GM12878 (cell line): ENCODE measurements at regions of chr9 and their contacts with region 1.

Region 1: GRCh38 chr9:98056269-98057137 is at the start of gene NANS:
- DNase-seq: no peak
- ATAC-seq: peak; percentile 97
- H3K4me3 ChIP-seq: peak within 1 kb of the TSS; percentile 77
- H3K27ac ChIP-seq: peak within 1 kb of the TSS; percentile 84
- H3K4me1 ChIP-seq: peaks cover 3% of the 10 kb centered on the region; the same call in 1 of the 2 replicates
- H3K27me3 ChIP-seq: no peaks in the 10 kb centered on the region
- CTCF ChIP-seq: no peak
- EP300 ChIP-seq: no peak
- POLR2A ChIP-seq: peak; percentile 99
- RAD21 ChIP-seq: no peak
- polyA plus RNA-seq, gene NANS: 21.0 to 26.1 TPM

Region 2: DNA sequence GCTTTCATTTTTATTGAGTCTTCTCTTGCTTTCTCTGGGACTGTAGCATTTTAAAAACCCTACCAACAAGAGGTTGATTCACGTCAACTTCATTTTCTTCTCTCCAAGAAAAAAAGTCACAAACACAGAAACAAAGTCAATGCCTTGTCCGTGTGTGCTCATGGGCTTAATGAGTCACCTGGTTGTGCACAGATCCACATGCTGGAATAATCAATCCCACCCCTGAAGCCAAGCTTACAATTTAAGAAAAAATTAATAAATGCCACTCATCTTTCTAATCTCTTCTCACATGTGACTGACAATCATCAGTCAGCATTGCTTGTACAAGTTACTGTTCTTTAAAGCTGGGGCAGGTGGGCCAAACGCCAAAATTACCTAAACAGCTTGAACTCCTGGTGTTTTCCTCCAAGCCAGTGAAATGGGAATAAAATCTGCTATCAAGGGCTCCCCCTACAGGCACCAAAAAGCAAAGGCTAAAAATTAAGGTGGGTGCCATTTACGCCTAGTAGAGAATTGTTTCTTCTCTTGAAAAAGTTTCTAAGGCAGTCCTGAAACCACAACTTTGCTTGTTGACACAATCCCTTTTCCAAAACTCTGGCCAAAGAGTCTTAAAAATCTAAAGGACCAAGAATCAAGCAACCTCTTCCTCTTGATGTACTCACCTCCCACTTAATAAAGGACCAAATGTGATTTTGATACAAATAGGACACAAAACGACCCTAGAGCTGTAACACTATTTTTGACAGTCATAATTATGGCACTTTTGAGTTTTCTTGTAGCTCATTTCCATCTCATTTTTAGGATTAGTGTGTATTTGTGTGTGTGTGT is 155.6 kb before region 1 on chr9:
- CTCF ChIA-PET with region 1: no interaction called
- POLR2A ChIA-PET with region 1: no interaction called
- RAD21 ChIA-PET with region 1: no interaction called
- SMC1A ChIA-PET with region 1: no interaction called
- in situ Hi-C with region 1: no loop called
- intact Hi-C with region 1: no loop called
- DNase-seq: no peak
- ATAC-seq: peak; percentile 61
- H3K4me3 ChIP-seq: no peak overlapping the region
- H3K27ac ChIP-seq: no peak overlapping the region
- H3K4me1 ChIP-seq: peaks cover 5% of the 10 kb centered on the region; the same call in 1 of the 2 replicates
- H3K27me3 ChIP-seq: no peaks in the 10 kb centered on the region
- CTCF ChIP-seq: peak; percentile 76 to 79 (median 78)
- EP300 ChIP-seq: no peak
- POLR2A ChIP-seq: no peak
- RAD21 ChIP-seq: peak; percentile 76

Region 3: DNA sequence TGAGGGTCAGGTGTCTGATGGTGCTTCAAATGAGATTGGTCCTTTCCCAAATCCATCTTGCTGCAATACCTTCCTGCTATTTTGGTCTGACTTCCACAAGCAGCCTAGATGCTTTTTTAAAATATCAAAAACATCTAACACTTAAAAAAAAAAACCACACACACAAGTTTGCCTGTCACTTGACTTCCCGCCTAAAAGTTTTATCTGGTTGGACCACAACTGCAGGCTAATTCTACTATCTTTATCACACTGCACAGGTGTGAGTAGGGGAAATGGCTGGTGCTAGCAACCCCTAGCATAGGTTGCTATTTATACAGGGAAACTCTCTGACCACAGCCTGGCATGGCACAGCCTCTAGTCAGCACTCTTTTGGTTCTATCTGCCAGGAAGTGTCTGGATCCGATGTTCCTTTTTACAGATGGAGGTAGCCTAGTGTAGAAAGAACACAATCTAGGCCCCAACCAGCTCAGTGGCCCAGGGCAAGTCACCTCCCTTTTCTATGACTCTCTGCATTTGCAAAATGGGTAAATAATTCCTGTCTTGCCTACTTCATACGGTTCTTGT is 118.3 kb before region 1 on chr9 and contains the start of gene HEMGN:
- CTCF ChIA-PET with region 1: no interaction called
- POLR2A ChIA-PET with region 1: no interaction called
- RAD21 ChIA-PET with region 1: no interaction called
- SMC1A ChIA-PET with region 1: no interaction called
- in situ Hi-C with region 1: no loop called
- intact Hi-C with region 1: no loop called
- DNase-seq: peak; percentile 28
- ATAC-seq: peak; percentile 84
- H3K4me3 ChIP-seq: no peak within 1 kb of the TSS
- H3K27ac ChIP-seq: no peak within 1 kb of the TSS
- H3K4me1 ChIP-seq: peaks cover 7% of the 10 kb centered on the region; the same call in 1 of the 2 replicates
- H3K27me3 ChIP-seq: no peaks in the 10 kb centered on the region
- CTCF ChIP-seq: no peak
- EP300 ChIP-seq: 0 out of 4 replicates have a peak, but pooled peaks of 1 of the 2 experiments have one; percentile 9
- POLR2A ChIP-seq: no peak
- RAD21 ChIP-seq: no peak
- polyA plus RNA-seq, gene HEMGN: 0.03 to 0.18 TPM

Region 4: GRCh38 chr9:97982683-97983588 is 73.6 kb before region 1 on chr9 and contains the start of gene ANP32B:
- CTCF ChIA-PET with region 1: interaction called, 3 read pairs
- POLR2A ChIA-PET with region 1: interaction called, 11 read pairs
- RAD21 ChIA-PET with region 1: interaction called, 6 read pairs
- SMC1A ChIA-PET with region 1: interaction called, 6 read pairs
- in situ Hi-C with region 1: no loop called
- intact Hi-C with region 1: no loop called
- DNase-seq: peak; percentile 44
- ATAC-seq: peak; percentile 88
- H3K4me3 ChIP-seq: peak within 1 kb of the TSS; percentile 90
- H3K27ac ChIP-seq: peak within 1 kb of the TSS; percentile 99
- H3K4me1 ChIP-seq: peaks cover 18% of the 10 kb centered on the region
- H3K27me3 ChIP-seq: no peaks in the 10 kb centered on the region
- CTCF ChIP-seq: peak; percentile 76 to 84 (median 83); a peak in 5 of 6 replicates
- EP300 ChIP-seq: no peak
- POLR2A ChIP-seq: peak; percentile 78
- RAD21 ChIP-seq: peak; percentile 39; the same call in 1 of the 2 replicates
- polyA plus RNA-seq, gene ANP32B: 85.9 to 204 TPM

Region 5: DNA sequence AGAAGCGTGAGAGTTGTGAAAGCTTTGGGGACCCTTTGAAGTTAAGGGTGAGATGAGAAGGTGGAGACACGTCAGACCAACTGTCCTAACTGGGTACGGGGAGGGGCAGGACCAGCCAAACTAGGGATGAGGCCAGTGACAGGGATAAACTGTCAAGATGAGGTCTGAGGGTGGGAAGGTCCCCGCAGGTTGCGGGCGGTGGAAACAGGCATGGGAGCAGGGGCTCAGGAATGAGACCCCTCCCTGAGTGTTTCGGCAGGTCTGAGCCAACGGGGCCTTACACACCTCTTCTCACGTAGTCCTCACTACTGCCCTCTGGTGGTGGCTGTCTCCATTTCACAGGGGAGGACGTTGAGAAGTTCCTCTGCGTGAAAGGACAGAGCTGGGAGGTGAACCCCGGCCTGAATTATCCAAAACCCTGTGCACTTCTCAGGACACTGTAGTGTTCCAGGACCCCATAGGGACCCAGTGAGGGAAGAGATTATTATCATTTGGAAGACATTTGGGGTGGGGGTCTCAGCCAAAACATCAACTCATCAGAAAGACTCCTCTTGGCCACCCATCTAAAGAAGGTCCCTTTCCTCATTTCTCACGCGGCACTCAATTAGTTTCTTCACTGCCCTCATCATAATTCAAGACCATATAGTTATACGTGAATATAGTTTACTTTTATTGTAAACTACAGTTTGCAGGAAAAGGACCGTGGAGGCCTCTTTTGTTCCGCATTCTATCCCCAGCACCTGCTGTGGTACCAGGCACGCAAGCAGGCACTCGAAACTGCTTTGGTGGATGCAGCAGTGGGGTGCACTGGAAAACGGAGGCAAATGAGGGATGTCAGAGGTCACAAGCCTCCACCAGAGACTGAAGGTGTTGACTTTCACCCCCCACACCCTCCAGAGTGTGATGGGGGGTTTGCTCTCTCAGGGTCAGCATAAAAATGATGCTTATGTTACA is 21.6 kb before region 1 on chr9:
- CTCF ChIA-PET with region 1: interaction called, 18 read pairs
- POLR2A ChIA-PET with region 1: interaction called, 12 read pairs
- RAD21 ChIA-PET with region 1: interaction called, 5 read pairs
- SMC1A ChIA-PET with region 1: interaction called, 8 read pairs
- in situ Hi-C with region 1: no loop called
- intact Hi-C with region 1: no loop called
- DNase-seq: peak; percentile 61
- ATAC-seq: peak; percentile 84
- H3K4me3 ChIP-seq: peak overlapping the region; percentile 25; the same call in 1 of the 2 replicates
- H3K27ac ChIP-seq: peak overlapping the region; percentile 89
- H3K4me1 ChIP-seq: peaks cover 46% of the 10 kb centered on the region
- H3K27me3 ChIP-seq: no peaks in the 10 kb centered on the region
- CTCF ChIP-seq: peak; percentile 72 to 88 (median 81)
- EP300 ChIP-seq: no peak
- POLR2A ChIP-seq: no peak
- RAD21 ChIP-seq: peak; percentile 53

Region 6: DNA sequence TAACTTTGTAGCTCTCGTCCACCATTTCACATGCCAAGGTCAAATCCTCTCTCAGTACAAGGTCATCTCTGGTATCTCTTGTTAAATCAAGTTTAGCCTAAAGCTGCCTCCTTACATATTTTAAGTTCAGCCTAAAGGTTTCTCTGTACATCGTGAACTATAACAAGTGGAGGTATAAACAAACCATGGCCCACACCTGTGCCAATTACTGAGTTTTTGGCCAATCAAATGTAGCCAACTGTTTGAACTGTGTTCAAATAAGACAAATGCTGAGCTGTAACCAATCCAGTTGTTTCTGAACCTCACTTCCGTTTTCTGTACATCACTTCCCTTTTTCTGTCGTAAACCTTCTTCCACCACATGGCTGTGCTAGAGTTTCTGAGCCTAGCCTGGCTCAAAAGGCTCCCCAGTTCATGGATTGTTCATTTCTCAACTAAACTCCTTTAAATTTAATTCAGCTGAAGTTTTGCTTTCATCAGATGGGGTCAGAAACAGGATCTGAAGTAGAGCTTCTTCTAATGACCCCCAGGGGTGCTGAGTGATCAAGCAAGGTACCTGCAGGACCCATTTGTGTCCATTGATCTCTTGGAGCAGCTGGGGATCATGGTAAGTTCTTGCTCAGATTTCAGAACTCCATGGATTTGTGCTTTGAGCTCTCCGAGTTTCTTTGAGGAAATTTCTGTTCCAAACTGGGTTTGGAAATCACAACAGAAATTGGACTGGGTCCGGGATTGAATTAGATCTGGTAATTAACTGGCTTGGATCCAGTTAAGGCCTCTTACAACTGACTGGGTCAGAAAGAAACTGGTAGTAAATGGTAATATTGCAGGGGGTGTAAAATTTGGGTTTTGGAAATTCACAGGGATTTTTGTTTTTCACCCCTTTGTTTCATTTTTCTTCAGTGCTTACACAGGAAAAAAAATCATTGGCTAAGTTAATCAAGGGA is 11.0 kb before region 1 on chr9:
- CTCF ChIA-PET with region 1: interaction called, 29 read pairs
- POLR2A ChIA-PET with region 1: interaction called, 16 read pairs
- RAD21 ChIA-PET with region 1: interaction called, 9 read pairs
- SMC1A ChIA-PET with region 1: interaction called, 27 read pairs
- in situ Hi-C with region 1: no loop called
- intact Hi-C with region 1: no loop called
- DNase-seq: peak; percentile 84
- ATAC-seq: peak; percentile 93
- H3K4me3 ChIP-seq: peak overlapping the region; percentile 58
- H3K27ac ChIP-seq: peak overlapping the region; percentile 88
- H3K4me1 ChIP-seq: peaks cover 11% of the 10 kb centered on the region; the same call in 1 of the 2 replicates
- H3K27me3 ChIP-seq: no peaks in the 10 kb centered on the region
- CTCF ChIP-seq: peak in 2 of 3 experiments; percentile 9 to 30; a peak in 1 of 6 replicates
- EP300 ChIP-seq: no peak; a peak in 1 of 4 replicates
- POLR2A ChIP-seq: peak; percentile 54; the same call in 1 of the 2 replicates
- RAD21 ChIP-seq: no peak

Region 7: GRCh38 chr9:98101868-98102273 is 45.4 kb after region 1 on chr9:
- CTCF ChIA-PET with region 1: interaction called, 4 read pairs
- POLR2A ChIA-PET with region 1: interaction called, 11 read pairs
- RAD21 ChIA-PET with region 1: interaction called, 5 read pairs
- SMC1A ChIA-PET with region 1: interaction called, 6 read pairs
- in situ Hi-C with region 1: no loop called
- intact Hi-C with region 1: no loop called
- DNase-seq: peak; percentile 99
- ATAC-seq: peak; percentile 90
- H3K4me3 ChIP-seq: peak overlapping the region; percentile 31; the same call in 1 of the 2 replicates
- H3K27ac ChIP-seq: peak overlapping the region; percentile 75
- H3K4me1 ChIP-seq: peaks cover 87% of the 10 kb centered on the region
- H3K27me3 ChIP-seq: no peaks in the 10 kb centered on the region
- CTCF ChIP-seq: no peak
- EP300 ChIP-seq: peak; percentile 80 to 82
- POLR2A ChIP-seq: peak; percentile 65
- RAD21 ChIP-seq: no peak

Region 8: GRCh38 chr9:98255578-98256296 is 199.2 kb after region 1 on chr9 and contains the start of gene TBC1D2:
- CTCF ChIA-PET with region 1: interaction called, 3 read pairs
- POLR2A ChIA-PET with region 1: interaction called, 10 read pairs
- RAD21 ChIA-PET with region 1: interaction called, 7 read pairs
- SMC1A ChIA-PET with region 1: interaction called, 5 read pairs
- in situ Hi-C with region 1: no loop called
- intact Hi-C with region 1: no loop called
- DNase-seq: peak; percentile 85
- ATAC-seq: peak; percentile 94
- H3K4me3 ChIP-seq: peak within 1 kb of the TSS; percentile 75
- H3K27ac ChIP-seq: peak within 1 kb of the TSS; percentile 93
- H3K4me1 ChIP-seq: peaks cover 4% of the 10 kb centered on the region
- H3K27me3 ChIP-seq: no peaks in the 10 kb centered on the region
- CTCF ChIP-seq: peak; percentile 15 to 28 (median 21); a peak in 2 of 6 replicates
- EP300 ChIP-seq: no peak
- POLR2A ChIP-seq: peak; percentile 92
- RAD21 ChIP-seq: no peak
- polyA plus RNA-seq, gene TBC1D2: 0.04 to 0.06 TPM

Region 9: DNA sequence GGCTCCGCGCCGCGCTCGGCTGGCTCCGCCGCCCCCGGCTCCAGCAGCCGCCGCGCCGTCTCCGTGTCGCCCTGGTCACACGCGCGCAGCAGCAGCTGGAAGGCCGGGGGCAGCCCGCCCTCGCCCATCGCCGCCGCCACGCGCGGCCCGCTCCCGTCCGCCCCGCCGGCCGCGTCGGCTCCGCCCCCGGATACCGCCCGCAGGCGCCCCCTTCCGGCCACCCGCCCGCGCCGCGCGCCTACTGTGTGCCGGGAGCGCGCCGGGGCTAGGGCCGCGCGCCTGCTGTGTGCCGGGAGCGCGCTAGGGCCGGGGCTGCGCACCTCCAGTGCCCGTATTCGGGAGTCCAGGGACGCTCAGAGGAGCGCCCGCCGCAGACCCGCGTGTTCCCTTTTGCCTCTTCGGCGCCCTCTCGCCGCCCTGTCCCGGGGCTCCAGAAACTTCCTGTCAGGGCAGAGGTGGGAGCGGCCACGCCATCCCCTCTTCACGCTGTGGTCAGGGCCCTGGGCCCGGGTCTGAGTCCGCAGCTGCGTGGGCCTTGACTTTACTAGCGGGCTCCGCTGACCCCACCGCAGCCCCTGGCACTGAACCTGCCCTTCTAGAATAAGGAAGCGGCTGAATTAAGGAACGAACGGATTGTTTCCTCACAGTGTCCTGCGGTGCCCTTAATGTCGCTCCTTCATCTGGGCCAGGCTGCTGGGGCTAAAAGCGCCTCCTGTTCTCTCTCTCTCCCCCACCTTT is 740.0 kb after region 1 on chr9 and contains the start of gene ANKS6:
- CTCF ChIA-PET with region 1: no interaction called
- POLR2A ChIA-PET with region 1: no interaction called
- RAD21 ChIA-PET with region 1: no interaction called
- SMC1A ChIA-PET with region 1: no interaction called
- in situ Hi-C with region 1: loop called (anchors 25 kb)
- intact Hi-C with region 1: no loop called
- DNase-seq: no peak
- ATAC-seq: peak; percentile 89
- H3K4me3 ChIP-seq: peak within 1 kb of the TSS; percentile 72
- H3K27ac ChIP-seq: no peak within 1 kb of the TSS
- H3K4me1 ChIP-seq: no peaks in the 10 kb centered on the region; the same call in 1 of the 2 replicates
- H3K27me3 ChIP-seq: peaks cover 0 to 2% of the 10 kb centered on the region in 2 experiments; a peak in 1 of 4 replicates
- CTCF ChIP-seq: peak; percentile 19 to 56 (median 37); a peak in 5 of 6 replicates
- EP300 ChIP-seq: no peak
- POLR2A ChIP-seq: peak; percentile 64; the same call in 1 of the 2 replicates
- RAD21 ChIP-seq: no peak
- polyA plus RNA-seq, gene ANKS6: 2.3 to 3.0 TPM